Naive thymus-derived CD4-positive, alpha-beta T cell (primary cell): ENCODE measurements at regions of chr16 and their contacts with region 1.

Region 1: DNA sequence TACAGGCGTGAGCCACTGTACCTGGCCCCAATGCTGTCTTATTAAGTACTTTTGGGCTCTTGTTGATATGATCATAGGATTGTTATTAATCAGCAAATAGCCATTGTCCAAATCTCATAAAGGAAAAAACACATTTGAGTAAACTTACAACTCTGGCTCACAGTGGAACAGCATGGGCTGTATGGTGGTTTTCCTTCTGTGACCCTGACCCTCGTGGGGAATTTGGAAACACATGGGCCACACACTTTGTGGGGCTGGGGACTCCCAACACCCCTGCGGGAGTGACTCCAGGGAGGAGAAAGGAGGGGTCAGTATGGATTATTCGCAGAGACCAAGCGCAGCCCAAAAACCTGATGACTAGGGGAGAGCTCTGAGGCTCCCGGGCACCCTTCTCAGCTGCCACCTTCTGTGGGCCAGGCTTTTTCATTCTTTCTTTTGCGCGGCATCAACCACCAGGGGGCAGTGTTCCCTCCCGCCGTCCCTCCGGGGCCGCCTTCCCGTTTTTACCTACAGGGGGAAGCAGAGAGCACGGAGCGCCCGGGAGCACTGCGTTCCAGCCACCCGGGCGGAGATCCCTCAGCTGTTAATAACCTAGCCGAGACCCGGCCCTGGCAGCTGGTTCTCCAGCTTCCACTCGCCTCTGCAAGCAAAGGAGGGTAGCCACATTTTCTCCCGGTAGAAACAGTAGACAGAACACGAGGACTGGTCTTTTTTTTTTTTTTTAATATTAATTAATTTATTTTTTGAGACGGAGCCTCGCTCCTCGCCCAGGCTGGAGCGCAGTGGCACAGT is 9.7 kb downstream of the TSNAXIP1 start:
- DNase-seq: peak; percentile 76 to 98 (median 87)
- ATAC-seq: peak; percentile 100
- H3K4me3 ChIP-seq: no peak overlapping the region
- H3K4me3 Mint-ChIP-seq: peak overlapping the region in 7 of 10 donors; percentile 30 to 62 (median 49)
- H3K27ac ChIP-seq: no peak overlapping the region
- H3K27ac Mint-ChIP-seq: peak overlapping the region in 4 of 9 donors; percentile 13 to 77 (median 46)
- H3K4me1 ChIP-seq: no peaks in the 10 kb centered on the region
- H3K4me1 Mint-ChIP-seq: peaks cover 0 to 8% (median 6%) of the 10 kb centered on the region in 7 donors
- H3K27me3 ChIP-seq: no peaks in the 10 kb centered on the region
- H3K27me3 Mint-ChIP-seq: peaks cover 0 to 6% (median 0%) of the 10 kb centered on the region in 5 donors

Region 2: DNA sequence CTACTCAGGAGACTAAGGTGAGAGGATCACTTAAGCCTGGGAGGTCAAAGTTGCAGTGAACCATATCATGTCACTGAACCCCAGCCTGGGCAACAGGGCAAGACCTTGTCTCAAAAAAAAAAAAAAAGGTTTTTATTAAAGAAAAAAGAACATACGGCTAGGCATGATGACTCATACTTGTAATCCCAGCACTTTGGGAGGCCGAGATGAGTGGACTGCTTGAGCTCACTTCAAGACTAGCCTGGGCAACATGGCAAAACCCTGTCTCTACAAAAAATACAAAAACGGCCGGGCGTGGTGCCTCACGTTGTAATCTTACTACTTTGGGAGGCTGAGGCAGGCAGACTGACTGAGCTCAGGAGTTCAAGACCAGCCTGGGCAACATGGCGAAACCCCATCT is 48.5 kb before region 1 on chr16:
- CTCF ChIA-PET with region 1: no interaction called
- POLR2A ChIA-PET with region 1: no interaction called
- intact Hi-C with region 1: no loop called
- DNase-seq: no peak
- ATAC-seq: no peak
- H3K4me3 ChIP-seq: no peak overlapping the region
- H3K4me3 Mint-ChIP-seq: no peak overlapping the region
- H3K27ac ChIP-seq: no peak overlapping the region
- H3K27ac Mint-ChIP-seq: no peak overlapping the region
- H3K4me1 ChIP-seq: no peaks in the 10 kb centered on the region
- H3K4me1 Mint-ChIP-seq: peaks cover under 1 to 10% (median 5%) of the 10 kb centered on the region in 7 donors
- H3K27me3 ChIP-seq: no peaks in the 10 kb centered on the region
- H3K27me3 Mint-ChIP-seq: no peaks in the 10 kb centered on the region

Region 3: DNA sequence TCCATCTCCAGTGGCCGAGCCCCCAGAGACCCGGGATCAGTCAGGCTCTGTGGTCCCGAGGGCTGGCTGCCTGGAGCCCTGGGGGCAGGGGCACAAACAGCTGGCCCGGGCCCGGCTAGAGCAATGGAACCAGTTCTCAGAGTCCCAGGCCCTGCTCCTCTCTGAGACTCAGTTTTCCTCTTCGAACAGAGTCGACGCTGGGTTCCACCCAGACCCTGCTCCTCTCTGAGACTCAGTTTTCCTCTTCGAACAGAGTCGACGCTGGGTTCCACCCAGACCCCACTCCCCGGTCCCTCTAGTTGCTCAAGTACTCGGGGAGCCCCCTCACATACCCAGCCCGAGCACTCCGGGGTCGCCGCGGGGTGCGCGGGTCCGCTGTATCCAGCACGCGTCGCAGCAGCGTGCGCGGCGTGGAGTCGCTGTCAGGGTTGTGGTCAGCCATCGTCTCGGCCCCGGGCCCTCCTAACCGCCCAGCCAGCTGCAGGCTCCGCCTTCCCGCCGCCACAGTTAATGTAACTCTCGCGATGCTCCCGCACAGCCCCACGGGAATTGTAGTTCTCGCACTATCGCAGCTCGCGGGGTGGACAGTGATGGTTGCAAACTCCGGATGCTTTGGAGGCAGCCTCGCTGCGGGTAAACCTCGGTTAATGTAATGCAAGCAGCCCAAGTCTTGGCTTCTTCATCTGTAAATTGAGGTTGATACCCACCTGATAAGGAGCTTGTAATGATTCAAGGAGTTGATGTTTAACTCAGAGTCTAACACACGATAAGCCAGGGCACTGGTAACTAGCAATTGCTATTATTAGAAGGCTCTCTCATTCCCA is 17.2 kb after region 1 on chr16:
- CTCF ChIA-PET with region 1: interaction called, 8 read pairs
- POLR2A ChIA-PET with region 1: interaction called, 3 read pairs
- intact Hi-C with region 1: loop called (anchors 1 kb)
- DNase-seq: peak; percentile 83 to 92 (median 89)
- ATAC-seq: peak; percentile 100
- H3K4me3 ChIP-seq: peak overlapping the region; percentile 82
- H3K4me3 Mint-ChIP-seq: peak overlapping the region; percentile 90 to 96 (median 93)
- H3K27ac ChIP-seq: peak overlapping the region; percentile 70
- H3K27ac Mint-ChIP-seq: peak overlapping the region; percentile 73 to 93 (median 82)
- H3K4me1 ChIP-seq: peaks cover 8 to 9% of the 10 kb centered on the region in 2 donors
- H3K4me1 Mint-ChIP-seq: peaks cover 11 to 19% (median 15%) of the 10 kb centered on the region in 7 donors
- H3K27me3 ChIP-seq: no peaks in the 10 kb centered on the region
- H3K27me3 Mint-ChIP-seq: no peaks in the 10 kb centered on the region

Region 4: GRCh38 chr16:67865316-67865715 is 48.9 kb after region 1 on chr16:
- CTCF ChIA-PET with region 1: interaction called, 6 read pairs
- POLR2A ChIA-PET with region 1: interaction called, 5 read pairs
- intact Hi-C with region 1: loop called (anchors 1 kb)
- DNase-seq: peak in 2 of 9 donors; percentile 18 to 19
- ATAC-seq: peak; percentile 64
- H3K4me3 ChIP-seq: no peak overlapping the region
- H3K4me3 Mint-ChIP-seq: no peak overlapping the region
- H3K27ac ChIP-seq: no peak overlapping the region
- H3K27ac Mint-ChIP-seq: peak overlapping the region in 1 of 9 donors; percentile 65
- H3K4me1 ChIP-seq: no peaks in the 10 kb centered on the region
- H3K4me1 Mint-ChIP-seq: peaks cover 4 to 16% (median 8%) of the 10 kb centered on the region in 7 donors
- H3K27me3 ChIP-seq: no peaks in the 10 kb centered on the region
- H3K27me3 Mint-ChIP-seq: no peaks in the 10 kb centered on the region

Region 5: DNA sequence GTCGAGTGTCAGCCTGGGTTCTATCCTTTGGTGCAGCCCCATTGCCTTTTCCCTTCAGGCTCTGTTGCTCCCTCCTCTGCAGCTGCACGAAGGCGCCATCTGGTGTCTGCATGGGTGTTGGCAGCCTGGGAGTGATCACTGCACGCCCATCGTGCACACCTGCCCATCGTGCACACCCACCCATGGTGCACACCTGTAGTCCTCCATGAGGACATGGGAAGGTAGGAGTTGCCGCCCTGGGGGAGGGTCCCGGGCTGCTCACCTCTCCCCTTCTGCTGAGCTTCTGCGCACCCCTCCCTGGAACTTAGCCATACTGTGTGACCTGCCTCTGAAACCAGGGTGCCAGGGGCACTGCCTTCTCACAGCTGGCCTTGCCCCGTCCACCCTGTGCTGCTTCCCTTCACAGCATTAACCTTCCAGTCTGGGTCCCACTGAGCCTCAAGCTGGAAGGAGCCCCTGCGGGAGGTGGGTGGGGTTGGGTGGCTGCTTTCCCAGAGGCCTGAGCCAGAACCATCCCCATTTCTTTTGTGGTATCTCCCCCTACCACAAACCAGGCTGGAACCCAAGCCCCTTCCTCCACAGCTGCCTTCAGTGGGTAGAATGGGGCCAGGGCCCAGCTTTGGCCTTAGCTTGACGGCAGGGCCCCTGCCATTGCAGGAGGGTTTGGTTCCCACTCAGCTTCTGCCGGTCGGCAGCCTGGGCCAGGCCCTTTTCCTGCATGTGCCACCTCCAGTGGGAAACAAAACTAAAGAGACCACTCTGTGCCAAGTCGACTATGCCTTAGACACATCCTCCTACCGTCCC is 112.3 kb after region 1 on chr16:
- CTCF ChIA-PET with region 1: interaction called, 16 read pairs
- POLR2A ChIA-PET with region 1: no interaction called
- intact Hi-C with region 1: loop called (anchors 1 kb)
- DNase-seq: peak; percentile 53 to 77 (median 73)
- ATAC-seq: peak; percentile 86
- H3K4me3 ChIP-seq: no peak overlapping the region
- H3K4me3 Mint-ChIP-seq: peak overlapping the region in 1 of 10 donors; percentile 45
- H3K27ac ChIP-seq: no peak overlapping the region
- H3K27ac Mint-ChIP-seq: peak overlapping the region in 4 of 9 donors; percentile 6 to 67 (median 56)
- H3K4me1 ChIP-seq: no peaks in the 10 kb centered on the region
- H3K4me1 Mint-ChIP-seq: peaks cover 0 to 10% (median 7%) of the 10 kb centered on the region in 7 donors
- H3K27me3 ChIP-seq: no peaks in the 10 kb centered on the region
- H3K27me3 Mint-ChIP-seq: no peaks in the 10 kb centered on the region

Region 6: DNA sequence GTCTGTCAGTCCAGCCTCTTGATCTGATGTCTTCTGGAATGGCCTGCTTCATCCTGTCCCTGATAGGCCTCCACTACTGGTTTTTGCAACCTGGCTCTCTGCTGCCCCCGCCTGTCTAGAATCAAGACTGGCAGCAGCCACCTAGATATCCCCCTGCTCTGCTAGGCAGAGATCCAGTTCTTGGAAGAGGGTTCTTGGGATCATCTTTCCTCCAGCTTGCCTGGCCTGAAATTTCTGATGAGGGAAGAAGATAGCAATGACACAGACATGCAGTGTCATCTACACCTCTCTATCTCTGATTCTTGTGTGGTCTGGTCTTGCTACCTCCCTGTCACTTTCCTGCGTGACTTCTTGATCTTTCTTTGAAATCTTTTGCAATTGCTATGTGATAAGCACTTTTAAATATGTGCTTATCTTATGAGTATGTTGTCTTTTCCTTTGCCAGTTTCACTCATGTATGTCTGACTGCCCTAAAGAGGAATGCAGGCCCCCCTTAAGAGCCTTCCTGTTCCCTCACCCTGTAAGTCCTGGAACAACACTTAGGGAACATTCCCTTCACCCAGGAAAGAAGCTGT is 248.4 kb after region 1 on chr16:
- CTCF ChIA-PET with region 1: interaction called, 5 read pairs
- POLR2A ChIA-PET with region 1: interaction called, 3 read pairs
- intact Hi-C with region 1: loop called in 1 of 2 experiments (anchors 1 kb)
- DNase-seq: peak; percentile 45 to 72 (median 65)
- ATAC-seq: peak; percentile 84
- H3K4me3 ChIP-seq: no peak overlapping the region
- H3K4me3 Mint-ChIP-seq: peak overlapping the region; percentile 3 to 69 (median 34)
- H3K27ac ChIP-seq: peak overlapping the region; percentile 52
- H3K27ac Mint-ChIP-seq: peak overlapping the region; percentile 65 to 90 (median 83)
- H3K4me1 ChIP-seq: peaks cover 56 to 67% of the 10 kb centered on the region in 2 donors
- H3K4me1 Mint-ChIP-seq: peaks cover 60 to 86% (median 76%) of the 10 kb centered on the region in 7 donors
- H3K27me3 ChIP-seq: no peaks in the 10 kb centered on the region
- H3K27me3 Mint-ChIP-seq: no peaks in the 10 kb centered on the region